Activated CD4-positive, alpha-beta T cell treated with anti-CD3 and anti-CD28 coated beads, Interleukin-2, amount 10 ng/mL, durations not matched to agents 24 days and 14 days (primary cell): ENCODE measurements at regions of chr16 and their contacts with region 1.

Region 1: GRCh38 chr16:57591086-57591869 is 37.2 kb upstream of the ADGRG1 start:
- DNase-seq: peak; percentile 90
- H3K4me3 Mint-ChIP-seq: peak overlapping the region; percentile 79
- H3K27ac Mint-ChIP-seq: peak overlapping the region; percentile 94
- H3K4me1 Mint-ChIP-seq: peaks cover 37% of the 10 kb centered on the region
- H3K27me3 Mint-ChIP-seq: no peaks in the 10 kb centered on the region

Region 2: DNA sequence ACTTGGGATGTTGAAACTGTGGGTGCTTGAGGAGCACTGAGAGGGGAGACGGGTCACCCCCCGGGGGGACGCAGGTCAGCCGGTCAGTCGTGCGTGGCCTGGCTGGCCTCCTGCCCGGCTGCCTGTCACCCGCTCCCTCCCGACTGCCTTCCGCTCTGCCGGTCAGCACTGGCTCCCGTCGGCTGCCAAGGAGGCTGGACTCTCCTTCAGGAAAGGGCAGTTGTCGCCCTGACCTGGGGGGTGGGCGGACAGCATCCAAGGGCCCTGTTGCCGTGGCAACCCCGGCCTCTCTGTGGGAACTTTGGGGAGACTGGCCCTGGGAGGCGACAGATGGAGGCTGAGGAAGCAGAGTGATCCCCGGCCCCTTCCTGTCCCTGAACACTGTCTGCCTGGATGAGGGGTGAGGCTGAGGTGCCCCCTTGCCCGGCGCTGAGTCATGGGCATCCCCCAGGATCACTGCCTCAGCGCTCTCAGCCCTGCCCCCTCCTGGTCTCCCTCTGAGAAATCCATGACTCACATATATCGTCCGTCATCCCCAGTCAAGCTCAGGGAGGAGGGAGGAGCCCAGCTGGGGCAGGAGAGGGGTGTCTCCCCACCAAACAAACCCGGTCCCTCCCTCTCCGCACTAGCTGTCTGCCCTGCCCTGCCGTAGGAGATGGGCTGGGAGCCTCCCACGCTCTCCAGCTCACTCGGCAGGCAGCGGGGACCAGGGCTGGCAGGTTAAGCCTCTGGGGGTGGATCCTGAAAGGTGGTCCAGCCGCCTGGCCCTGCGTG is 36.9 kb after region 1 on chr16 and contains the start of gene ADGRG1:
- intact Hi-C with region 1: loop called (anchors 5 kb)
- DNase-seq: peak; percentile 81
- H3K4me3 Mint-ChIP-seq: peak within 1 kb of the TSS; percentile 72
- H3K27ac Mint-ChIP-seq: peak within 1 kb of the TSS; percentile 75
- H3K4me1 Mint-ChIP-seq: peaks cover 16% of the 10 kb centered on the region
- H3K27me3 Mint-ChIP-seq: peaks cover 24% of the 10 kb centered on the region
- total RNA-seq, gene ADGRG1: 3.8 and 4.8 TPM in 2 replicates